Transverse colon (tissue), 4 donors: ENCODE measurements at regions of chr13 and their contacts with region 1.

Region 1: DNA sequence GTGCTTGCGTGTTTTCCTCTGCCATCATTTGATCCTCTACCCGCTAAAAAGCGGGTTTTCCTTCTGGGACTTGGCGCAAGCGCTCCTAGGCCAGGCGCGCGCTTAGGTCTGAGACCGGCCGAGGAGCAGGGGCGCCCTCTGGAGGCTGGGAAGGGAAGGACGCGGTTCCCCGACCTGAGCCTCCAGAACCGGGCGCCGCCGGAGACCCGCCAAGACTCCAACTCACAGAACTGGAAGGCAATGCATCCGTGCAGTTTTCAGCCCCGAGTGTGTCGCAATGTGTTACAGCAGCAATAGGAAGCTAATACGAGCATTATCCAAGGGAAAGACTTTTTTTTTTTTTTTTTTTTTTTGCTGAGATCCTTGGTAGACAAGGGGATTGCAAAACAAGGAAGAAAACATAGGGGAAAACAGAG is 190.9 kb downstream of the COL4A1 start:
- DNase-seq: peak; percentile 63
- H3K4me3 ChIP-seq: no peak overlapping the region
- H3K27ac ChIP-seq: no peak overlapping the region
- H3K4me1 ChIP-seq: no peaks in the 10 kb centered on the region
- H3K27me3 ChIP-seq: peaks cover 28% of the 10 kb centered on the region
- CTCF ChIP-seq: peak; percentile 67 to 81 (median 75)
- EP300 ChIP-seq: no peak
- POLR2A ChIP-seq: no peak

Region 2: DNA sequence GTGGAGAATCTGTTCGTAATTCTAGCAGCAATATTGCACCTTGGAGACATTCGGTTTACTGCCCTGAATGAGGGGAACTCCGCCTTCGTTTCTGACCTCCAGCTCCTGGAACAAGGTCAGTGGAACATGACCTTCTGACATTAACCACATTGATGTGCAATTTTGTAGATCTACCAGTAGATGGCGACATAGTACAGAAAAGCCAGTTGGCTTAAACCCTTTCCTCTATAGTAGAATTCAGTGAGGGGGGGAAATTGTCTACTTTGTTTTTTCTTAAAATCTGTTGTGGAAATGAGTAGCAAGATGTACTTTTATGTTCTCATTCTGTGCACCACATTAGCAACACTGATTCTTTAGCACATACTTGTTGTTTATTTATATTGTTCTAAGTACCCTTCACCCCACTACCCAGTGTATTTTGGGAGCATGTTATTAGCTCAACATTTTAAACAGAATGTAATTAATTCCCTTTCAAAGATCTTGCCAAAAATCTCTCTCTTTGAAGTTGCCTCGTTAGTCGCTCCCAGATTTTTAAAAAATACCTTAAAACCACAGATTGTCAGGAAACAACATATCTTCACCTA is 1154.4 kb before region 1 on chr13:
- in situ Hi-C with region 1: loop called (anchors 10 to 25 kb)
- intact Hi-C with region 1: no loop called
- DNase-seq: no peak
- H3K4me3 ChIP-seq: no peak overlapping the region
- H3K27ac ChIP-seq: no peak overlapping the region
- H3K4me1 ChIP-seq: no peaks in the 10 kb centered on the region
- H3K27me3 ChIP-seq: no peaks in the 10 kb centered on the region
- CTCF ChIP-seq: peak; percentile 76 to 87 (median 84)
- EP300 ChIP-seq: no peak
- POLR2A ChIP-seq: no peak

Region 3: GRCh38 chr13:109145631-109146030 is 970.4 kb before region 1 on chr13:
- in situ Hi-C with region 1: loop called (anchors 10 to 25 kb)
- intact Hi-C with region 1: no loop called
- DNase-seq: peak; percentile 30
- H3K4me3 ChIP-seq: no peak overlapping the region
- H3K27ac ChIP-seq: no peak overlapping the region
- H3K4me1 ChIP-seq: peaks cover 0 to under 1% (median 0%) of the 10 kb centered on the region in 4 donors
- H3K27me3 ChIP-seq: peaks cover 21% of the 10 kb centered on the region
- CTCF ChIP-seq: peak; percentile 63 to 71 (median 64)
- EP300 ChIP-seq: no peak
- POLR2A ChIP-seq: no peak

Region 4: DNA sequence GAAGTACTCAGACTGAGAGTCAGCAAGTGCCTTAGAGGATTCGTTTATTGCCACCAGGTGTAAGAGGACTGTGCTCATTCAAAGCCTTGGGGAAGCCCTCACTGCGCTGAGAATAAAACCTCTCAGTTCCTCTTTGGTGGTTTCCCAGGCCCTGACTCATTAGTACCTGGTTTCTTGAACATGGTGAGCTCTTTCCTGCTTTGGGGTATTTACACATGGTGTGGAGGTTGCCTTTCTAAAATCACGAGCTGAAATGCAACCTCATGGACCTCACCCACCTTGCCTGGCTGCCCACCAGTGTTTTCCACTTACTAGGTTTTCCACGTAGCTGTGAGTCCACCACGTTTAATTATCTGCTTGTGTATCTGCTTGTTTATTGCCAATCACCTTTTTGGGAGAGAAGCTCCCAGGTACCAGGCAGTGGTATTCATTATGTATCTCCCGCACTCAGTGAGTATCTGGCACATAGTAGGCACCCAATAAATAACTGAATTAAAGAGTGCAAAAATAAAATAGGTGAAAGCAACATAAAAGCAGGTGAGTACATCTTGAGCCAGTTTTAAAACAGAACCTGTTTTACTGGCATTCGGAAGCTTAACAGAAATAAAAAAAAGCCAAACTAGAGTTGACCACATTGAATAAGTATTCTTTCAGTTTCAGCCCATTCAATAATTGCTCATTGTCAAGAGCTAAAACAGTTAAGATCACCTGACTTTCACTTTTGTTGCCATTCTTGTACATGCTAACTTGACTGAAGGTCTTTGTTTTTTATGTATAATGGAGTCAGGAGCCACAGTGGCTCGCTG is 953.6 kb before region 1 on chr13:
- in situ Hi-C with region 1: loop called in 1 of 4 experiments (anchors 25 kb)
- intact Hi-C with region 1: no loop called
- DNase-seq: peak; percentile 22
- H3K4me3 ChIP-seq: no peak overlapping the region
- H3K27ac ChIP-seq: no peak overlapping the region
- H3K4me1 ChIP-seq: no peaks in the 10 kb centered on the region
- H3K27me3 ChIP-seq: no peaks in the 10 kb centered on the region
- CTCF ChIP-seq: no peak
- EP300 ChIP-seq: no peak
- POLR2A ChIP-seq: no peak

Region 5: GRCh38 chr13:109610517-109610916 is 505.6 kb before region 1 on chr13:
- in situ Hi-C with region 1: loop called in 1 of 4 experiments (anchors 25 kb)
- intact Hi-C with region 1: no loop called
- DNase-seq: peak; percentile 55
- H3K4me3 ChIP-seq: no peak overlapping the region
- H3K27ac ChIP-seq: no peak overlapping the region
- H3K4me1 ChIP-seq: no peaks in the 10 kb centered on the region
- H3K27me3 ChIP-seq: no peaks in the 10 kb centered on the region
- CTCF ChIP-seq: peak; percentile 17 to 53 (median 36)
- EP300 ChIP-seq: no peak
- POLR2A ChIP-seq: no peak